Naive thymus-derived CD4-positive, alpha-beta T cell (primary cell): ENCODE measurements at regions of chr17 and their contacts with region 1.

Region 1: GRCh38 chr17:73156166-73156840 is 8.5 kb upstream of the SSTR2 start:
- DNase-seq: peak in 8 of 9 donors; percentile 11 to 64 (median 45)
- ATAC-seq: peak; percentile 89
- H3K4me3 ChIP-seq: no peak overlapping the region
- H3K4me3 Mint-ChIP-seq: no peak overlapping the region
- H3K27ac ChIP-seq: no peak overlapping the region
- H3K27ac Mint-ChIP-seq: peak overlapping the region in 1 of 9 donors; percentile 33
- H3K4me1 ChIP-seq: no peaks in the 10 kb centered on the region
- H3K4me1 Mint-ChIP-seq: peaks cover 0 to 14% (median 7%) of the 10 kb centered on the region in 7 donors
- H3K27me3 ChIP-seq: no peaks in the 10 kb centered on the region
- H3K27me3 Mint-ChIP-seq: peaks cover 14 to 19% (median 17%) of the 10 kb centered on the region in 5 donors

Region 2: GRCh38 chr17:72937707-72938106 is 218.6 kb before region 1 on chr17:
- CTCF ChIA-PET with region 1: no interaction called
- POLR2A ChIA-PET with region 1: no interaction called
- intact Hi-C with region 1: no loop called
- DNase-seq: no peak
- ATAC-seq: no peak
- H3K4me3 ChIP-seq: no peak overlapping the region
- H3K4me3 Mint-ChIP-seq: no peak overlapping the region
- H3K27ac ChIP-seq: no peak overlapping the region
- H3K27ac Mint-ChIP-seq: no peak overlapping the region
- H3K4me1 ChIP-seq: no peaks in the 10 kb centered on the region
- H3K4me1 Mint-ChIP-seq: peaks cover 0 to 4% (median 0%) of the 10 kb centered on the region in 7 donors
- H3K27me3 ChIP-seq: no peaks in the 10 kb centered on the region
- H3K27me3 Mint-ChIP-seq: no peaks in the 10 kb centered on the region

Region 3: GRCh38 chr17:72985881-72986720 is 170.2 kb before region 1 on chr17:
- CTCF ChIA-PET with region 1: interaction called, 4 read pairs
- POLR2A ChIA-PET with region 1: no interaction called
- intact Hi-C with region 1: loop called (anchors 1 kb)
- DNase-seq: peak; percentile 12 to 60 (median 31)
- ATAC-seq: peak; percentile 74
- H3K4me3 ChIP-seq: no peak overlapping the region
- H3K4me3 Mint-ChIP-seq: no peak overlapping the region
- H3K27ac ChIP-seq: no peak overlapping the region
- H3K27ac Mint-ChIP-seq: peak overlapping the region in 1 of 9 donors; percentile 33
- H3K4me1 ChIP-seq: no peaks in the 10 kb centered on the region
- H3K4me1 Mint-ChIP-seq: peaks cover 0 to 3% (median 0%) of the 10 kb centered on the region in 7 donors
- H3K27me3 ChIP-seq: no peaks in the 10 kb centered on the region
- H3K27me3 Mint-ChIP-seq: no peaks in the 10 kb centered on the region

Region 4: DNA sequence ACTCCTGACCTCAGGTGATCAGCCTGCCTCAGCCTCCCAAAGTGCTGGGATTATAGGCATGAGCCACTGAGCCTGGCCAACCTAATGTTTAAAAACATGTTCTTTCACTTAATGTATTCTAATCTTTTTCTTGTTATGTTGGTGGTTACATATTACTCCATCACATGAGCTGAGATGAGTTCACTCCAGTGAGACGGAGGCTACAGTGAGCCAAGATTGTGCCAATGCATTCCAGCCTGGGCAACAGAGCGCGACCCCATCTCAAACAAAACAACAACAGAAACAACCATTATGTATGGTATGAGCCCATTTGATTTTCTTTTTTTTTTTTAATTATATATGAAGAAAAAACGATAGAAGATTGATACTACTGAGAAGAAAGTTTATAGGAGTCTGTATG is 103.4 kb before region 1 on chr17:
- CTCF ChIA-PET with region 1: no interaction called
- POLR2A ChIA-PET with region 1: no interaction called
- intact Hi-C with region 1: no loop called
- DNase-seq: no peak
- ATAC-seq: no peak
- H3K4me3 ChIP-seq: no peak overlapping the region
- H3K4me3 Mint-ChIP-seq: no peak overlapping the region
- H3K27ac ChIP-seq: no peak overlapping the region
- H3K27ac Mint-ChIP-seq: peak overlapping the region in 1 of 9 donors; percentile 6
- H3K4me1 ChIP-seq: no peaks in the 10 kb centered on the region
- H3K4me1 Mint-ChIP-seq: peaks cover 0 to 9% (median 6%) of the 10 kb centered on the region in 7 donors
- H3K27me3 ChIP-seq: no peaks in the 10 kb centered on the region
- H3K27me3 Mint-ChIP-seq: no peaks in the 10 kb centered on the region

Region 5: DNA sequence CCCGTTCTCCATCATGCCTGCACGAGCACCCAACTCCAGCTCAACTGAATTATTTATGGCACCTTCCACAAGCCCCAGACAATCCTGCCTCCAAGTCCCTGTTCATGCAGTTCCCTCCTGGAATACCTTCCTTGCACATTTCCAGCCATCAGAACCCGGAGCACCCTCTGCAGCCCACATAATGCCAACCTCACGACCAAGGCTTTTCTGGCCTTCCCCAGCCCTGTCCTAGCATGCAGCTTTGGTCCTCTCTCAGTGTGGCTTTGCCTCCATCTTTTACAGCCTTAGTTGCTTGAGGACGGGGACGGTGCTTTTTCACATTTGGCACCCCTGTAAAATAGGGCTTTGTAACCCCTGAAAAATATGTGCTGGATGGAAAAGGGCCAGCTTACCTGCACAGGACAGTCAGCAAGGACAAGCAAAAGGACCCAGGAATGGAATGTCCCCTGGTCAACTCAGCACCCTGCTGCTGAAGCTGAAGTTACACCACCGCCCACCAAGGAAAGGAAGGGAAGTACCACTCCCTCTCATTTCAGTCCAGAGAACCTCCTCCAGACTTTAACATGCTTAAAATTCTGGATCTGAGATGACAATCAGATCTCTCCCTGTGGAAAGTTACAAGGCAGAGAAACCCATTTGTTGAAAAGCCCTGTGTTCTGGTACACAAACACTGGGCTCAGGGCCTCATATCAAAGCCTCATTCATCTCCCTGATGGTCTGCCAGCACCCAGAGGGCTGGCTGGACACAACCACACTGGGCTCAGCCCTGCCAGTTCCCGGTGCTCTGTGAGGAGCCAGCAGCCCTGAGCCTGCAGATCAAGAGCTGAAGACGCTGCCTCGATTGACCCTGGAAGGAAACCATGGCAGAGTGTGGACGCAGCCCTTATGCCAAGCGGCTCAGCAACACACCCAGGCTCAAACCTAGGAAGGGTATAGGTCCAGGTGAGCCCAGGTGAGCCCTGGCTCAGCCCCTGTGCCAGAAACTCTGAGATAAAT is 66.7 kb before region 1 on chr17:
- CTCF ChIA-PET with region 1: no interaction called
- POLR2A ChIA-PET with region 1: no interaction called
- intact Hi-C with region 1: no loop called
- DNase-seq: no peak
- ATAC-seq: no peak
- H3K4me3 ChIP-seq: no peak overlapping the region
- H3K4me3 Mint-ChIP-seq: no peak overlapping the region
- H3K27ac ChIP-seq: no peak overlapping the region
- H3K27ac Mint-ChIP-seq: peak overlapping the region in 2 of 9 donors; percentile 5 to 23
- H3K4me1 ChIP-seq: peaks cover 7 to 20% of the 10 kb centered on the region in 2 donors
- H3K4me1 Mint-ChIP-seq: peaks cover 0 to 41% (median 36%) of the 10 kb centered on the region in 7 donors
- H3K27me3 ChIP-seq: no peaks in the 10 kb centered on the region
- H3K27me3 Mint-ChIP-seq: peaks cover 0 to 6% (median 0%) of the 10 kb centered on the region in 5 donors

Region 6: DNA sequence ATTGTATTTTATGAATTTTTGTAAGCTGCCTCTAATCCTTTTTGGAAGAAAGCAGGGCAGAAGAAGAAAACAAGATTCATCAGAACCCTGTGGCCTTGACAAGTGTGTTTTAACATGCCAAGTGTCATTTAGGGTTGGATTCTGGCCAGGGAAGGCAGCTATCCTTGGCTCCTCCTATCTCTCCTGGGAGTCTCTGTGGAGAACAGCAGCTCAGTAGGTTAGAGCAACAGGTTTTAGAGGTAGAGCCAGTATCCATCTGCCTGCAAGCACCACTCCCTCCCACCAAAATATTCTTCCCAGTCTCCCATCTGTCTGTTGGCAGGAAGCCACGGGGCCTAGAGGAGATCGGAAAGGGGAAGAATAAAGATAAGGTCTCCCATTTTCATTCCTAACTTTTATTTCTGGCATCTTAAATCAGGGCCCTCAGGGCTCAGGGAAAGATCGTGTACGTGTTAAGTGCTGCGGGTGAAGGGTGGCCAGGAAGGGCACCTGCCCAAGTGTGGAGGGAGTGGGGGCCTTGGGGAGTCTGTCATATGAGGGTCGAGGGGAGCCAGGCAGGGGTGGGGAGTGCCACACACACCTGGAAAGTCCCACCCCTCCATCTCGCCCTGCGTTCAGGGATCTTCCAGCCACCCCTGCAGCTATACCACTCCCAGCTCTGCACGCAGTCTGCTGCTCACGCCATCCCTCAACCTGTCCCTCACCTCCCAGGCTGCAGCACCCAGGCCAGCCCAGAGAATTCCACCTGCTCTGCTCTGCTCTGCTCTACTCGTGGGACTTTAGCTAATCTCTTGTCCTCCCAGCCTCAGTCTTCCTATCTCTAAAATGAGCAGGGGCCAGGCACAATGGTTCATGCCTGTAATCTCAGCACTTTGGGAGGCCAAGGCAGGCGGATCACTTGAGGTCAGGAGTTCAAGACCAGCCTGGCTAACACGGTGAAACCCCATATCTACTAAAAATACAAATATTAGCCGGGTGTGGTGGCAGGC is 122.5 kb after region 1 on chr17:
- CTCF ChIA-PET with region 1: no interaction called
- POLR2A ChIA-PET with region 1: no interaction called
- intact Hi-C with region 1: no loop called
- DNase-seq: no peak
- ATAC-seq: no peak
- H3K4me3 ChIP-seq: no peak overlapping the region
- H3K4me3 Mint-ChIP-seq: no peak overlapping the region
- H3K27ac ChIP-seq: no peak overlapping the region
- H3K27ac Mint-ChIP-seq: no peak overlapping the region
- H3K4me1 ChIP-seq: no peaks in the 10 kb centered on the region
- H3K4me1 Mint-ChIP-seq: peaks cover 0 to 3% (median 0%) of the 10 kb centered on the region in 7 donors
- H3K27me3 ChIP-seq: no peaks in the 10 kb centered on the region
- H3K27me3 Mint-ChIP-seq: no peaks in the 10 kb centered on the region